Esophagus squamous epithelium (tissue), 5 donors: ENCODE measurements at regions of chr14 and their contacts with region 1.

Region 1: GRCh38 chr14:30656190-30656632 is 34.1 kb downstream of the SCFD1 start:
- DNase-seq: no peak
- H3K4me3 ChIP-seq: no peak overlapping the region
- H3K27ac ChIP-seq: no peak overlapping the region
- H3K4me1 ChIP-seq: no peaks in the 10 kb centered on the region
- H3K27me3 ChIP-seq: no peaks in the 10 kb centered on the region
- CTCF ChIP-seq: peak; percentile 32 to 65 (median 52)
- POLR2A ChIP-seq: no peak

Region 2: GRCh38 chr14:30580616-30581282 is 75.5 kb before region 1 on chr14:
- intact Hi-C with region 1: no loop called
- DNase-seq: no peak
- H3K4me3 ChIP-seq: no peak overlapping the region
- H3K27ac ChIP-seq: no peak overlapping the region
- H3K4me1 ChIP-seq: no peaks in the 10 kb centered on the region
- H3K27me3 ChIP-seq: no peaks in the 10 kb centered on the region
- CTCF ChIP-seq: no peak
- POLR2A ChIP-seq: no peak

Region 3: GRCh38 chr14:30691751-30692398 is 35.7 kb after region 1 on chr14:
- intact Hi-C with region 1: loop called (anchors 5 kb)
- DNase-seq: no peak
- H3K4me3 ChIP-seq: no peak overlapping the region
- H3K27ac ChIP-seq: no peak overlapping the region
- H3K4me1 ChIP-seq: peaks cover 0 to 7% (median 0%) of the 10 kb centered on the region in 3 donors
- H3K27me3 ChIP-seq: no peaks in the 10 kb centered on the region
- CTCF ChIP-seq: no peak
- POLR2A ChIP-seq: no peak